RWPE1 (cell line): ENCODE measurements at regions of chr6 and their contacts with region 1.

Region 1: DNA sequence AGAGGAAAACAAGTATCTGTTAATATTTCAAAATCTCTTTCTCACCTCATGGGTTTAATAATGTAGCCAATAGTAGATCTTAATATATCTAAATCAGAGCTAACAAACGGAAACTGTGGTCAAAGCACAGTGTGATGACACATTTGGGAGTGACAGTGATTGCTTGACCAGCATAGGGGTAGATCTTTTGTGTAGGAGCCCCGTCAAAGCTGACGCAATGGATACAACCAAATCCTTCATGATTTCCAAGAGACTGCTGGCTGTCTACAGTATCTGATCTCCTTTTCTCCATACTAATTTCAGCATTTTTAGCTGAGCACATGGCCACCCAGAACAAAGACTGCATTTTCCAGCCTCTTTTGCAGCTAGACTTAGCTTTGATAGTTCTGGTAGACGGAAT is 299.3 kb upstream of the ECI2 start:
- DNase-seq: no peak
- H3K27ac ChIP-seq: no peak overlapping the region
- CTCF ChIP-seq: no peak

Region 2: DNA sequence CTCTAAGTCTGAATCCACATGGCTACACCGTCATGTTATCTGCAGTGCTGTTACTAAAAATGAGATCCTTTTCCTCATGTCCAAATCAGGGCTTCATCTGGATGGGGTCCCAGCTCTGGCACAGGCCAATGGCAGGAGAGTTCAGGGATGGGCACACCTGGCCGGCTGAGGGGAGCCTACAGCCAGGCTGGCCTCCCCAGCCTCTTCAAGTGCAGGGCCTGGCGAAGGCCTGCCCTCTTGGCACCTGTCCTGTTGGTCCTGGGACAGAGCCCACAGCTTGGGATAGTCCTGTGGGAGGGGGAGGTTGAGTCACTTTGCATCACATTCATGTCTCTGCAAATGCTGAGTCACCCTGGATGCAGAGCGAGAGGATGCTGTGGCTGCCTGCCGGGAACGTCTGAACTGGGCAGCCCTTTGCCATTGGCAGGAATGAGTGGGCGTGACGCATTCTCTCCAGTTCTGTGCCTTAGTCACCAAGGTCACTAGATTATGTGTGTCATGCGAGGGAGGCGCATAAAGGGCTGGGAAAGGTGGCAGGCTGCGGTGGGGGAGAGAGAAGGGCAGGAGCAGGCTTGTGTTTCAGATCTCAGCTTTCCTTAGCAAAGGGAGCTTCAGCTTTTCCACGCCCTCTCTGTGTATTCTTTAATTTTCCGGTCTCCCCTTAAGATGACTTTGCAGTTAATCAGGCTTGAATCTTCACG is 76.1 kb before region 1 on chr6:
- CTCF ChIA-PET with region 1: no interaction called
- POLR2A ChIA-PET with region 1: no interaction called
- DNase-seq: peak; percentile 96
- H3K27ac ChIP-seq: peak overlapping the region; percentile 98
- CTCF ChIP-seq: no peak

Region 3: GRCh38 chr6:4491906-4492260 is 57.2 kb after region 1 on chr6:
- CTCF ChIA-PET with region 1: no interaction called
- POLR2A ChIA-PET with region 1: no interaction called
- DNase-seq: no peak
- H3K27ac ChIP-seq: no peak overlapping the region
- CTCF ChIP-seq: no peak

Region 4: GRCh38 chr6:4647414-4648365 is 213.0 kb after region 1 on chr6:
- CTCF ChIA-PET with region 1: no interaction called
- POLR2A ChIA-PET with region 1: interaction called, 10 read pairs
- DNase-seq: peak; percentile 50
- H3K27ac ChIP-seq: no peak overlapping the region
- CTCF ChIP-seq: no peak